Activated B cell treated with CpG ODN at 0.5 μM for 24 hours (primary cell): ENCODE measurements at regions of chr1 and their contacts with region 1.

Region 1: GRCh38 chr1:40438391-40439015 is 11.8 kb upstream of the ZFP69B start:
- DNase-seq: no peak
- ATAC-seq: peak; percentile 49
- H3K4me3 Mint-ChIP-seq: no peak overlapping the region
- H3K27ac Mint-ChIP-seq: no peak overlapping the region
- H3K4me1 Mint-ChIP-seq: peaks cover 4% of the 10 kb centered on the region
- H3K27me3 Mint-ChIP-seq: no peaks in the 10 kb centered on the region
- CTCF ChIP-seq: no peak

Region 2: GRCh38 chr1:40078512-40079333 is 359.8 kb before region 1 on chr1:
- CTCF ChIA-PET with region 1: interaction called, 11 read pairs
- POLR2A ChIA-PET with region 1: no interaction called
- intact Hi-C with region 1: loop called (anchors 1 kb)
- DNase-seq: no peak
- ATAC-seq: peak; percentile 92
- H3K4me3 Mint-ChIP-seq: no peak overlapping the region
- H3K27ac Mint-ChIP-seq: no peak overlapping the region
- H3K4me1 Mint-ChIP-seq: peaks cover 13% of the 10 kb centered on the region
- H3K27me3 Mint-ChIP-seq: no peaks in the 10 kb centered on the region
- CTCF ChIP-seq: peak; percentile 74

Region 3: DNA sequence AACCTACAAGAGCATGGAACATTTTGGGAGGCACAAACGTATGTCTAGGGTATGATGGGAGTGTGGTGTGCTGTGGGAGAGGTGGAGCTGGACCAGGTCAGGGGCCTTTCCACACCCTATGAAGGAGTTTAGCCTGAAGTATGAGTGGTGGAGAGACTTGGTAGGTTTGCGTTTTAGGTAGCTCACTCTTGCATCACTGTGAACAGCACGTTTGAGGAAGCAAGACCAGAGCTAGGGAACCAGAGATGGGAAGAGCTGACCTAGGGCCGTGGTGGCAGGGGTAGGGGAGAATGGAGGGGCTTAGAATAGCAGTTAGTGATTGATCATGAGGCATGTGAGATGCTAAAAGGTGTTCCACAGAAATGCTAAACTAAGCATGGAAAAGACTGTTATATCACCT is 13.3 kb before region 1 on chr1:
- CTCF ChIA-PET with region 1: interaction called, 14 read pairs
- POLR2A ChIA-PET with region 1: interaction called, 3 read pairs
- intact Hi-C with region 1: no loop called
- DNase-seq: no peak
- ATAC-seq: no peak
- H3K4me3 Mint-ChIP-seq: no peak overlapping the region
- H3K27ac Mint-ChIP-seq: no peak overlapping the region
- H3K4me1 Mint-ChIP-seq: peaks cover 36% of the 10 kb centered on the region
- H3K27me3 Mint-ChIP-seq: no peaks in the 10 kb centered on the region
- CTCF ChIP-seq: no peak